ENCODE measurements at regions of chr17 and their contacts with region 1.

Region 1: DNA sequence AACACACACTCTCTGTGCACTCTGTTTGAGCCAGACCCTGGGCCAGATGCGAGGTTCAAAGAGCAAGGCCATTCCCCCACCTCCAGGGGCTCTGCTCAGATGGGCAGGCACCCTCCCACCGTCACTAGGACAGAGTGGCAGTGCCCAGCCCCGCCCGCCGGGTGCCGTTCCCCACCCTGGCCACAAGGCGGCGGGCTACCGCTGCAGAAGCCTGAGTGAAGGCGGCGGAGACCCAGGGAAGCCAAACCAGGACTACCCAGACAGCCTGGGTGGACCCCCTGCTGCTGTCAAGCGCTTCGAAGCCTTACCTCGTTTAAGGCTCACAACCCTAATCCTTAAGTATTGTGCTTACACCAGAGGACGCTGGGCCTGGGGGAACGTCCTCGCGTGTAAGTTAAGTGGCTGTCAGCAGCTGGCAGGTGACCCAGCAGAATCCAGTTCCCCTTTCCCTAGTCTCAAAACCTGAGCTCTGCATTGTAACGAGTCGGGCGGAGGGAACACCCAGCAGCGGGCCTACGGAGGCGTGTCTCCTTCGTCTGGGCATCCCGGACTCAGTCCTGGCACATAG is 4.5 kb downstream of the ARHGAP27 start:
- DNase-seq: peak in 1 of 2 experiments; percentile 96
- H3K4me3 ChIP-seq: peak overlapping the region in 1 of 4 experiments; percentile 65; a peak in 3 of 8 replicates
- H3K27ac ChIP-seq: no peak overlapping the region
- H3K4me1 ChIP-seq: peaks cover 6 to 30% (median 20%) of the 10 kb centered on the region in 4 experiments
- H3K27me3 ChIP-seq: peaks cover 21 to 46% (median 40%) of the 10 kb centered on the region in 4 experiments
- CTCF ChIP-seq: peak; percentile 92 to 94 (median 92)
- EP300 ChIP-seq: peak in 1 of 2 experiments; percentile 15; a peak in 1 of 3 replicates
- POLR2A ChIP-seq: no peak
- RAD21 ChIP-seq: peak; percentile 74 to 87

Region 2: GRCh38 chr17:45235416-45236281 is 192.5 kb before region 1 on chr17:
- CTCF ChIA-PET with region 1: interaction called, 13 read pairs
- POLR2A ChIA-PET with region 1: no interaction called
- DNase-seq: peak; percentile 80 to 92
- H3K4me3 ChIP-seq: 0 out of 8 replicates have a peak overlapping the region, but pooled peaks of 1 of the 4 experiments have one; percentile 12
- H3K27ac ChIP-seq: no peak overlapping the region
- H3K4me1 ChIP-seq: peaks cover 3 to 20% (median 10%) of the 10 kb centered on the region in 4 experiments
- H3K27me3 ChIP-seq: peaks cover 0 to 26% (median 12%) of the 10 kb centered on the region in 4 experiments; a peak in 6 of 7 replicates
- CTCF ChIP-seq: peak; percentile 81 to 95 (median 82)
- EP300 ChIP-seq: no peak
- POLR2A ChIP-seq: no peak
- RAD21 ChIP-seq: peak; percentile 47 to 63; a peak in 3 of 4 replicates

Region 3: GRCh38 chr17:45325810-45326209 is 102.3 kb before region 1 on chr17:
- CTCF ChIA-PET with region 1: no interaction called
- POLR2A ChIA-PET with region 1: no interaction called
- DNase-seq: no peak
- H3K4me3 ChIP-seq: no peak overlapping the region
- H3K27ac ChIP-seq: no peak overlapping the region
- H3K4me1 ChIP-seq: peaks cover 0 to 3% (median 0%) of the 10 kb centered on the region in 4 experiments; a peak in 1 of 7 replicates
- H3K27me3 ChIP-seq: no peaks in the 10 kb centered on the region; a peak in 2 of 7 replicates
- CTCF ChIP-seq: no peak
- EP300 ChIP-seq: no peak
- POLR2A ChIP-seq: no peak
- RAD21 ChIP-seq: no peak

Region 4: DNA sequence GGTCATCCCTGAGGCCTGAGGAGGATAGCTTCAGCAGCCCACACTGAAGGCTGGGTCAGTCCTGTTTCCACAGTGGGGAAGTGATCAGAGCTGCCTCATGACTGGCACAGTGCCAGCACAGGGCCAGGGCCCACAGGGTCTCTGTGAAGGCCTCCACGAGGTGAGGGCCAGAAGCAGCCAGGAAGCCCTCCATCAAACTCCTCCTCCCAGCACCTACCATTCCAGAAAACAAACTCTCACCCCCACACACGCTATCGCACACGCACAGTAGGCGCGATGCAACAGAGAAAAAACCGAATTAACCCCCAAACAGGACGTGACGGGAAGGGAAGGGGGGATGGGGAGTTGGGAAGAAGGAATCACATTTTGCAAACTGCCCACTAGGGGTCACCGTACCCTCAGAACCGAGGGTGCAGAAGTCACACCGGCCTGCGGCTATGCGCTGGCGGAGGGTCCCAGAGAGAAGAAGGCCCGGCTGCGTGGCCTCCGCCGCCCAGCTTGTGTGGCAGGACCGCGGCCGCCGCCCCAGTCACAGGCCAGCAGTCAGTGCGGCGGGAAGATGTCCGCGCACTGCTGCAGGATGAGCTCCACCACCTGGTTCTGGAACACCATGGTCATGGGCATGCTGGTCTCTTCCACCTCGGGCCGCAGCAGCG is 33.1 kb before region 1 on chr17:
- CTCF ChIA-PET with region 1: interaction called, 331 read pairs
- POLR2A ChIA-PET with region 1: interaction called, 25 read pairs
- DNase-seq: peak; percentile 72 to 88
- H3K4me3 ChIP-seq: no peak overlapping the region; a peak in 1 of 8 replicates
- H3K27ac ChIP-seq: no peak overlapping the region
- H3K4me1 ChIP-seq: peaks cover 0 to 4% (median 3%) of the 10 kb centered on the region in 4 experiments; a peak in 4 of 7 replicates
- H3K27me3 ChIP-seq: peaks cover 0 to 2% (median 0%) of the 10 kb centered on the region in 4 experiments; a peak in 2 of 7 replicates
- CTCF ChIP-seq: peak; percentile 82 to 87 (median 87)
- EP300 ChIP-seq: no peak
- POLR2A ChIP-seq: peak in 1 of 2 experiments; percentile 39; a peak in 1 of 3 replicates
- RAD21 ChIP-seq: peak; percentile 87 to 89

Region 5: GRCh38 chr17:45410144-45411091 is 17.7 kb before region 1 on chr17:
- CTCF ChIA-PET with region 1: interaction called, 331 read pairs
- POLR2A ChIA-PET with region 1: interaction called, 3 read pairs
- DNase-seq: no peak
- H3K4me3 ChIP-seq: no peak overlapping the region
- H3K27ac ChIP-seq: no peak overlapping the region
- H3K4me1 ChIP-seq: peaks cover 0 to 21% (median 10%) of the 10 kb centered on the region in 4 experiments; a peak in 5 of 7 replicates
- H3K27me3 ChIP-seq: no peaks in the 10 kb centered on the region
- CTCF ChIP-seq: no peak
- EP300 ChIP-seq: no peak
- POLR2A ChIP-seq: no peak
- RAD21 ChIP-seq: no peak

Region 6: GRCh38 chr17:45440155-45440778 is 12.1 kb after region 1 on chr17:
- CTCF ChIA-PET with region 1: interaction called, 20 read pairs
- POLR2A ChIA-PET with region 1: interaction called, 6 read pairs
- DNase-seq: no peak
- H3K4me3 ChIP-seq: no peak overlapping the region
- H3K27ac ChIP-seq: no peak overlapping the region
- H3K4me1 ChIP-seq: peaks cover 3 to 10% (median 6%) of the 10 kb centered on the region in 4 experiments
- H3K27me3 ChIP-seq: no peaks in the 10 kb centered on the region; a peak in 1 of 7 replicates
- CTCF ChIP-seq: no peak
- EP300 ChIP-seq: no peak
- POLR2A ChIP-seq: no peak
- RAD21 ChIP-seq: no peak

Region 7: GRCh38 chr17:45650561-45650960 is 222.4 kb after region 1 on chr17:
- CTCF ChIA-PET with region 1: no interaction called
- POLR2A ChIA-PET with region 1: no interaction called
- DNase-seq: no peak
- H3K4me3 ChIP-seq: no peak overlapping the region
- H3K27ac ChIP-seq: no peak overlapping the region
- H3K4me1 ChIP-seq: peaks cover 0 to 5% (median under 1%) of the 10 kb centered on the region in 4 experiments; a peak in 3 of 7 replicates
- H3K27me3 ChIP-seq: no peaks in the 10 kb centered on the region
- CTCF ChIP-seq: no peak
- EP300 ChIP-seq: no peak
- POLR2A ChIP-seq: no peak
- RAD21 ChIP-seq: no peak